Cardiac septum (tissue), 1 donor: ENCODE measurements at regions of chr17 and their contacts with region 1.

Region 1: GRCh38 chr17:10844621-10845387 is 6.9 kb upstream of the PIRT start:
- DNase-seq: peak; percentile 82

Region 2: DNA sequence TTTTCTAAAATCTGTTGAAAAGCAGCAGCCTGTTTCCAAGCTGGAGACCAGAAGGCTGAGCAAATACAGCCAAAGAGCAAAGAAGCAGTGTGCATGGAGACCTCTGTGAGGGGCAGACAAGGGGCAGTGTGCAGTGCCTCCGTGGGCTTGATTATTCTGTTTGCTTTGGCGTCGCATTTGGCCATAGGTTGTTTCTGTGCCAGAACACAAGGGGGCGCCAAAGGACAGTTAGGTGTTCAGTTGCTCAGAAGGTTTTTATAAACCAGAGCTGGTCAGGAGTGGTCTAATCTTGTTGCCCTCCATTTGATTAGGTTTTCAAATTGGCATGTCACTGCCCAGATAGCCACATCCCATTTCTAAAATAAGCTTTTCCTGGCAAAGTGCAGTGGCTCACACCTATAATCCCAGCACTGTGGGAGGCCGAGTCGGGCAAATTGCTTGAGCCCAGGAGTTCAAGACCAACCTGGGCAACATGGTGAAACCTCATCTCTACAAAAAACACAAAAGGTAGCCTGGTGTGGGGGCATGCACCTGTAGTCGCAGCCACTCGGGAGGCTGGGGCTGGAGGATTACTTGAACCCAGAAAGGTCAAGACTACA is 198.3 kb before region 1 on chr17:
- intact Hi-C with region 1: loop called (anchors 5 kb)
- DNase-seq: peak; percentile 77

Region 3: GRCh38 chr17:10737168-10737622 is 107.6 kb before region 1 on chr17:
- intact Hi-C with region 1: loop called (anchors 2 kb)
- DNase-seq: no peak